ENCODE measurements at regions of chr6 and their contacts with region 1.

Region 1: DNA sequence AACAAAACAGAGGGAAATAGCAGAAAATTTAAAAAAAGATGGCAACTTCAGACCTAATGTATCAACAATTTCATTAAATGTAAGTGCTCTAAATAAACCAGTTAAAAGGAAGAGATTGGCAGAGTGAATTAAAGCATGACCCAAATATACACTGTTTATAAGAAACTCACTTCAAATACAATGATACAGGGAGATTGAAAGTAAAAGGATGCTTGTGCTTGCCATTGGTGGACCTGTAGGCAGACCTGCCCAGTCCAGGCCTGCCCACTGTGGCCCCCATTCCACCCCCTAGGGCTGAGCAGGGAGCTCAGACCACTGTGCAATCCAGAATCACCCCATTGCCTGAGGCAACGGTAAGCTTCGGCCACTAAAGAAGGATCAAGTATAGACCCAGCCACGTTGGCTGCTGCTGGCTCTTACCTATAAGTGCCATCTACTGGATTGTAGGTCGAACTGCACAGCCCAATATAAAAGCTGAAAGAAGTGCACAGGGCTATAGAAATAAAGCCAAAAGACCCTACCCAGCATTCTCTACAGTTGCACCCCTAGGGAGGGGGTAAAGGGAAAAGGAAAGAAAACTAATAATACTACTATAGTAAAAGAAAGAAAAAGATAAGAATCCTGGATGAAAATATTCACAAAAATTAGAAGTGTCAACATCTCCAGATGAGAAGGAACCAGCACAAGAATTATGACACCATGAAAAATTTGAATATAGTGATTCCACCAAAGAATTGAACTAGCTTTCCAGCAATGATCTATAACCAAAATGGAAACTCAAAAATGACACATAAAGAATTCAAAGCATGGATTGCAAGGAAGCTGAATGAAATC is 36.1 kb downstream of the PSMB1 start:
- DNase-seq: peak; percentile 59
- ATAC-seq: peak; percentile 97
- H3K4me3 Mint-ChIP-seq: no peak overlapping the region
- H3K27ac Mint-ChIP-seq: no peak overlapping the region
- H3K4me1 Mint-ChIP-seq: no peaks in the 10 kb centered on the region
- H3K27me3 Mint-ChIP-seq: peaks cover 33% of the 10 kb centered on the region

Region 2: GRCh38 chr6:168956884-168957730 is 1559.9 kb before region 1 on chr6:
- CTCF ChIA-PET with region 1: no interaction called
- POLR2A ChIA-PET with region 1: no interaction called
- intact Hi-C with region 1: loop called (anchors 5 kb)
- DNase-seq: peak; percentile 72
- ATAC-seq: peak; percentile 78
- H3K4me3 Mint-ChIP-seq: no peak overlapping the region
- H3K27ac Mint-ChIP-seq: no peak overlapping the region
- H3K4me1 Mint-ChIP-seq: peaks cover 4% of the 10 kb centered on the region
- H3K27me3 Mint-ChIP-seq: peaks cover 14% of the 10 kb centered on the region

Region 3: GRCh38 chr6:169950558-169950957 is 566.4 kb before region 1 on chr6:
- CTCF ChIA-PET with region 1: interaction called, 10 read pairs
- POLR2A ChIA-PET with region 1: no interaction called
- intact Hi-C with region 1: loop called (anchors 1 to 2 kb)
- DNase-seq: peak; percentile 62
- ATAC-seq: peak; percentile 63
- H3K4me3 Mint-ChIP-seq: no peak overlapping the region
- H3K27ac Mint-ChIP-seq: no peak overlapping the region
- H3K4me1 Mint-ChIP-seq: no peaks in the 10 kb centered on the region
- H3K27me3 Mint-ChIP-seq: no peaks in the 10 kb centered on the region